ENCODE measurements at regions of chr6 and their contacts with region 1.

Region 1: DNA sequence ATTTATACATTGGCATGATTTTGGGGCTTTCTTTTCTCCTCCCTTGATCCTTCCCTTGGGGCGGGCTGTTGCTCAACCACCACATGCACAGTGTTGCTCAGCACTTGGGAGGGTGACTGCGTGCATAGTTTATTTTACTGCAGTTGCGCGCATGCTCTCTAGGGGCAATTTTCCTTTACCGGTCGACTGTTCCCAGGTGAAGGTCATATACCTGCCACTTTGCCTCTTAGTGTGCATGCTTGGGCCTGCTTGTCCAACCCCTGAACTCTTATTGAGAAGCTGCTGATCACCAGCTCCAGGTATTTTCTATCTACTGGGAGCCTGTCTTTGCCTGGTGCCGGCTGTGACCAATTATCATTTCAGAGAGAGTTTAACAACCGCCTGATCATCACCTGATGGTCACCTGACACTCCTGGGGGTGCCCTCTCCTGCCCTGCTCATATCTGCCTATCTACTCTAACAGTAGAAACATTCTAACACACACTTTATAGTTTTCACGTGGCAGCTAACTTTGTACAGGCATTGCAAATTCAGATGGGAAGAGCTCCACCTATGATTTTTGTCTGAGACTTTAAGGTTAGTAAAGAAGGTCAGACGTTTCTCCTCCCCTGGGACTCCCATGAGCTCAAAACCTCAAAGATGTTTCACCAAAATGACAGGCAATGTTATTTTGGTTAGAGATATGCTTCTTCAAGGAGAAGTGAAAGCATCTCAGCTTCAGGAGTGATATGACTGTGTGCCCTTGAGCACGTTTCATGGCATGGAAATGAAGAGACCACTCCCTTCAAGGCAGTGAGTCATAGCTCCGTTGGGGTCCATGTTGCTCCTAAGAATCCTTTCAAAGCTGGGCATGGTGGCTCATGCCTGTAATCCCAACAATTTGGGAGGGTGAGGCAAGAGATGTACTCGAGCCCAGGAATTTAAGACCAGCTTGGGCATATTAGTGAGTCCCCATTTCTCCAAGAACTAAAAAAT is 227.5 kb upstream of the MYLIP start:
- DNase-seq: peak; percentile 83 to 90 (median 86)
- H3K4me3 ChIP-seq: peak overlapping the region; percentile 25 to 64 (median 31)
- H3K4me3 Mint-ChIP-seq: peak overlapping the region; percentile 69 to 88
- H3K27ac ChIP-seq: peak overlapping the region; percentile 85 to 96
- H3K27ac Mint-ChIP-seq: peak overlapping the region; percentile 92 to 98 (median 96)
- H3K4me1 ChIP-seq: peaks cover 54 to 58% of the 10 kb centered on the region in 2 donors
- H3K4me1 Mint-ChIP-seq: peaks cover 62% of the 10 kb centered on the region
- H3K27me3 ChIP-seq: no peaks in the 10 kb centered on the region
- H3K27me3 Mint-ChIP-seq: peaks cover 0 to 1% (median 0%) of the 10 kb centered on the region in 3 donors
- CTCF ChIP-seq: peak; percentile 53

Region 2: GRCh38 chr6:15870333-15871043 is 30.9 kb before region 1 on chr6:
- intact Hi-C with region 1: loop called in 1 of 2 experiments (anchors 5 kb)
- DNase-seq: peak; percentile 39 to 70 (median 62)
- H3K4me3 ChIP-seq: no peak overlapping the region
- H3K4me3 Mint-ChIP-seq: peak overlapping the region in 1 of 2 donors; percentile 56
- H3K27ac ChIP-seq: no peak overlapping the region
- H3K27ac Mint-ChIP-seq: peak overlapping the region in 6 of 7 donors; percentile 12 to 64 (median 27)
- H3K4me1 ChIP-seq: peaks cover 34 to 39% of the 10 kb centered on the region in 2 donors
- H3K4me1 Mint-ChIP-seq: peaks cover 40% of the 10 kb centered on the region
- H3K27me3 ChIP-seq: no peaks in the 10 kb centered on the region
- H3K27me3 Mint-ChIP-seq: peaks cover 0 to 1% (median 0%) of the 10 kb centered on the region in 3 donors
- CTCF ChIP-seq: no peak

Region 3: GRCh38 chr6:15929685-15930084 is 28.3 kb after region 1 on chr6:
- intact Hi-C with region 1: no loop called
- DNase-seq: peak; percentile 69 to 85 (median 69)
- H3K4me3 ChIP-seq: peak overlapping the region in 1 of 3 experiments; percentile 21
- H3K4me3 Mint-ChIP-seq: peak overlapping the region in 1 of 2 donors; percentile 78
- H3K27ac ChIP-seq: peak overlapping the region in 1 of 2 donors; percentile 49
- H3K27ac Mint-ChIP-seq: peak overlapping the region; percentile 5 to 85 (median 61)
- H3K4me1 ChIP-seq: peaks cover 36 to 39% of the 10 kb centered on the region in 2 donors
- H3K4me1 Mint-ChIP-seq: peaks cover 34% of the 10 kb centered on the region
- H3K27me3 ChIP-seq: no peaks in the 10 kb centered on the region
- H3K27me3 Mint-ChIP-seq: peaks cover 0 to 2% (median 0%) of the 10 kb centered on the region in 3 donors
- CTCF ChIP-seq: no peak

Measured in CD14-positive monocyte (primary cell).